ENCODE measurements at regions of chr3 and their contacts with region 1.

Region 1: DNA sequence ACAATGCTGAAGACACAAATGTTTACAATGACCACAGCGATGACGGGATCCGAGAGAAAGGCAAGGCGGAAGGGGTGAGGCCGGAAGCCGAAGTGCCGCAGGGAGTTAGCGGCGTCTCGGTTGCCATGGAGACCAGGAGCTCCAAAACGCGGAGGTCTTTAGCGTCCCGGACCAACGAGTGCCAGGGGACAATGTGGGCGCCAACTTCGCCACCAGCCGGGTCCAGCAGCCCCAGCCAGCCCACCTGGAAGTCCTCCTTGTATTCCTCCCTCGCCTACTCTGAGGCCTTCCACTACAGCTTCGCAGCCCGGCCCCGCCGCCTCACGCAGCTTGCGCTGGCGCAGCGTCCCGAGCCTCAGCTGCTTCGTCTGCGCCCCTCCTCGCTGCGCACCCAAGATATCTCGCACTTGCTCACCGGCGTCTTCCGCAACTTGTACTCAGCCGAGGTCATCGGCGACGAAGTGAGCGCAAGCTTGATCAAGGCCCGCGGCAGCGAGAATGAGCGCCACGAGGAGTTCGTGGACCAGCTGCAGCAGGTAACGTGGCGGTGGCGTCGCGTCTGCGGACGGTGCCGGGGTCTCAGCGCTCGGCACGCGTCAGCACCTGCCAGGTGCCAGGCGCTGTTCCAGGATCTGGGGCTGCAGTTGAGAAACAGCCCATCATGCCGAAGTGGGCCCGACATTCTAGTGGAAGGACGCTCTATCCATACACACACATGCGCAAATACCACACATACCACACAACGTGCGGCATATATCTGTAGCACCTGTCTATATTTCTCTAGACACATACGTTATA is at the start of gene DLEC1:
- DNase-seq: peak; percentile 67 to 69
- H3K4me3 ChIP-seq: peak within 1 kb of the TSS; percentile 58
- H3K4me3 Mint-ChIP-seq: peak within 1 kb of the TSS; percentile 57
- H3K27ac Mint-ChIP-seq: no peak within 1 kb of the TSS
- H3K4me1 ChIP-seq: no peaks in the 10 kb centered on the region
- H3K4me1 Mint-ChIP-seq: peaks cover 13% of the 10 kb centered on the region
- H3K27me3 ChIP-seq: no peaks in the 10 kb centered on the region
- H3K27me3 Mint-ChIP-seq: no peaks in the 10 kb centered on the region
- CTCF ChIP-seq: no peak
- total RNA-seq, gene DLEC1: 0.11 and 0.35 TPM in 2 replicates

Region 2: DNA sequence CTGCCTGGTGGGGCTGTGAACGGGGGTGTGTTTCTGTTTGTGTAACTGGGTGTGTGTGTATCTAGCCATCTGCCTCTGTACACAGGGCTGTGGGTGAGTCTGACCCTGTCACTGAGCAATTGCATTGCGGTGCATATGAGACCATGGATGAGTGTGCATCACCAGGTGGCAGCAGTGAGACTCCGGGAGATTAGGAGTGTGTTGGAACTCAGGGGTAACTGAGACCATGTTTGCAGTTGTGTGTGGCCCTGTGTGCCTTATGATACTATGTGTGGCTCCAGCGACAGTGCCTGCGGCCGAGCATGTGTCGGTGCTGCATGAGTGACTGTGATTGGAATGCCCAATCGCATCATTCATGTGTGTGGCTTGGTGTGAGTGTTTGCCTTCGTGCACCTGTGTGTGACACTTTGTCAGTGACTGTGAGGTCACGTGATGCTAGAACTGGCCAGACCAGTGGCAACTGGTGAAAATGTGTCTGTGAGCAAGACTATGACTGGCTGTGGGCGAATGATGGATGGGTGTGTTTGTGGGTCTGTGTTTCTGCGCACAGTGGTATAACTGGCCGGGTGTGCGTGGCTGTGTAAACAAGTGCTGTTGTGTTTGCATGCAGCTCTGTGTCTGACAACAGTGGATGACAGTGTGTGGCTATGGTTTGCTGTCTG is 34.8 kb before region 1 on chr3:
- CTCF ChIA-PET with region 1: interaction called, 10 read pairs
- POLR2A ChIA-PET with region 1: no interaction called
- intact Hi-C with region 1: loop called (anchors 1 kb)
- DNase-seq: peak; percentile 83 to 86
- H3K4me3 ChIP-seq: no peak overlapping the region
- H3K4me3 Mint-ChIP-seq: peak overlapping the region; percentile 26
- H3K27ac Mint-ChIP-seq: peak overlapping the region; percentile 23
- H3K4me1 ChIP-seq: peaks cover 21% of the 10 kb centered on the region
- H3K4me1 Mint-ChIP-seq: peaks cover 25% of the 10 kb centered on the region
- H3K27me3 ChIP-seq: no peaks in the 10 kb centered on the region
- H3K27me3 Mint-ChIP-seq: no peaks in the 10 kb centered on the region
- CTCF ChIP-seq: peak; percentile 73 to 78